GM12878 (cell line): ENCODE measurements at regions of chr15 and their contacts with region 1.

Region 1: DNA sequence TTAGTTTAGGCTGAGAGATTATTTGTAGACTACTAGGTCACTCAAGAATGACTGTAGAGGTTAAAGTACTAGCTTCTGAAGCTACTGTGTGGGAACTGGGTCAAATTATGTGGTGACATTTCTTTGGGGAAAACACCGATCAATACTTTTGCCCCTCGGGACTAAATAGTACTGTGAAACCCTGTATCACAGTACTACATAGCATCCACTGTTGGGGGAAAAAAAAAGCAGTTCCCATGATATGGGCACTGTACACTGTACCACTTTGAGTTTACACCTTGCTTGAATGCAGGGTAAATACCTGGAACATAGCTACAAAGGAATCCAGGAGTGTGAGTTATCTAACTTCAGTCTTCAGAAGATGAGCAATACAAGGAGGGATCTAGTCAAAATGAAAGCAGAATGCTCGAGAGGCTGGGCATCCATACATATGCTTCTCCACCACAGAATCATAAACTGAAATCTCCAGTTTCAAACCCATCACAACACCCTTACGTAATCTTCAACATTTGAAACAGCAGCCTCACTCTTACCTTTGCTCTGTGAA is 311.4 kb downstream of the UNC13C start:
- DNase-seq: peak; percentile 77
- ATAC-seq: peak; percentile 85
- H3K4me3 ChIP-seq: no peak overlapping the region
- H3K27ac ChIP-seq: no peak overlapping the region
- H3K4me1 ChIP-seq: no peaks in the 10 kb centered on the region
- H3K27me3 ChIP-seq: no peaks in the 10 kb centered on the region
- CTCF ChIP-seq: no peak
- EP300 ChIP-seq: peak; percentile 75 to 91; a peak in 3 of 4 replicates
- POLR2A ChIP-seq: no peak
- RAD21 ChIP-seq: no peak

Region 2: DNA sequence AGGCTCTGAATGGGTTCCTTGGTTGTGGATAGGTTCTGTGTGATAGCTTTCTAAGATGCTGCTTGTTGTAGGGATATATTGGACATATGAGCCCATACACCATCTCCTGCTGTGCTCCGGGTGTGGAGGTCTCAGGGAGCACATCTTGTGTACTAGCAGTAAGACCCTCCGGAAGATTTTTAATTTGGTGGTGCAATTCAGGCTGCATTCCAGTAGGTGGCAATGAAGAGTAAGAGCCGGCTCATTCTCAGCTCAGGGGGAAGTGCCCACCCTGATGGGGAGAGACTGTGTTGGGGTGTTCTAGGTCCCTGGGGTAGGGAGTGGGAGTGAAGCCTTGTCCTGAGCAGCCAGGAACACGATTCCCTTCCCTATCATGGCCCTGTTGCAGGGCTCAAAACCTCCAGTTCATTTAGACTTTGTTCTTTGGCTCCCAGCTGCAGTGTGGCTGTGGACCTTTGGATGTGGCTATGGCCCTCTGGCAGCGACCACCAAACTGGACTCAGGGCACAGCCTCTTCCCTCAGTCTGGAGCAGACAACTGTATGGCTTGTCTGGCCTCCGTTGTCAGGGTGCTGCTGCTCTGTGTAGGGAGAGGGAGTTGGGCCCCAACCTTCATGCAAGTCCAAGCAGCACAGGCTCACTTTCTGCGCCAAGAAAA is 206.7 kb before region 1 on chr15:
- CTCF ChIA-PET with region 1: interaction called, 35 read pairs
- POLR2A ChIA-PET with region 1: interaction called, 3 read pairs
- RAD21 ChIA-PET with region 1: interaction called, 46 read pairs
- SMC1A ChIA-PET with region 1: interaction called, 24 read pairs
- in situ Hi-C with region 1: no loop called
- intact Hi-C with region 1: loop called (anchors 2 kb)
- DNase-seq: no peak
- ATAC-seq: peak; percentile 68
- H3K4me3 ChIP-seq: no peak overlapping the region
- H3K27ac ChIP-seq: no peak overlapping the region
- H3K4me1 ChIP-seq: no peaks in the 10 kb centered on the region
- H3K27me3 ChIP-seq: no peaks in the 10 kb centered on the region
- CTCF ChIP-seq: peak; percentile 56 to 80 (median 61)
- EP300 ChIP-seq: no peak
- POLR2A ChIP-seq: no peak
- RAD21 ChIP-seq: peak; percentile 72

Region 3: DNA sequence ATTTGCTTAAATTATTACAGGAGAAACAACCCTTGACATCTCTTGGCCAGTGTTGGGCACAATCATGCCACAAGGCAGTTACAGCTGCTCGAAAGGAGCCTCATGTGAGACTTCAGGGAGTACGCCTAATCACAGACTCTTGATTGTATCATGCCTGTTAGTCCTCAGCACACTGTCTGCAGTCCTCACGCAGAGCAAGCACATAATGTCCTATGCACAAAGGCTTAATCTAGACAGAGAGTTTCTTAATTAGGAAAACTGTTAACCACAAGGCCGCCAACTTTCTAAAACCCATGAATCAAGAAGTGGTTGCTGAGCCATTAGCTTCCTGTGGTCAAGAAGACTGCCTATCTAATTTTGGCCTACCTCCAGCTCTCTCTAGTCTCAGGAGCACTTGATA is 139.4 kb before region 1 on chr15:
- CTCF ChIA-PET with region 1: interaction called, 4 read pairs
- POLR2A ChIA-PET with region 1: interaction called, 6 read pairs
- RAD21 ChIA-PET with region 1: interaction called, 28 read pairs
- SMC1A ChIA-PET with region 1: interaction called, 48 read pairs
- in situ Hi-C with region 1: no loop called
- intact Hi-C with region 1: loop called (anchors 2 kb)
- DNase-seq: peak; percentile 69
- ATAC-seq: peak; percentile 96
- H3K4me3 ChIP-seq: no peak overlapping the region
- H3K27ac ChIP-seq: no peak overlapping the region
- H3K4me1 ChIP-seq: no peaks in the 10 kb centered on the region
- H3K27me3 ChIP-seq: no peaks in the 10 kb centered on the region
- CTCF ChIP-seq: no peak
- EP300 ChIP-seq: peak; percentile 95
- POLR2A ChIP-seq: no peak
- RAD21 ChIP-seq: peak; percentile 0; the same call in 1 of the 2 replicates

Region 4: GRCh38 chr15:54347082-54347827 is 57.6 kb after region 1 on chr15:
- CTCF ChIA-PET with region 1: interaction called, 8 read pairs
- POLR2A ChIA-PET with region 1: interaction called, 4 read pairs
- RAD21 ChIA-PET with region 1: interaction called, 65 read pairs
- SMC1A ChIA-PET with region 1: interaction called, 64 read pairs
- in situ Hi-C with region 1: no loop called
- intact Hi-C with region 1: loop called (anchors 2 kb)
- DNase-seq: peak; percentile 40
- ATAC-seq: peak; percentile 88
- H3K4me3 ChIP-seq: no peak overlapping the region
- H3K27ac ChIP-seq: no peak overlapping the region
- H3K4me1 ChIP-seq: no peaks in the 10 kb centered on the region
- H3K27me3 ChIP-seq: no peaks in the 10 kb centered on the region
- CTCF ChIP-seq: no peak
- EP300 ChIP-seq: peak; percentile 86 to 90
- POLR2A ChIP-seq: no peak
- RAD21 ChIP-seq: peak; percentile 12; the same call in 1 of the 2 replicates

Region 5: GRCh38 chr15:54577476-54578250 is 288.0 kb after region 1 on chr15:
- CTCF ChIA-PET with region 1: no interaction called
- POLR2A ChIA-PET with region 1: no interaction called
- RAD21 ChIA-PET with region 1: interaction called, 13 read pairs
- SMC1A ChIA-PET with region 1: interaction called, 39 read pairs
- in situ Hi-C with region 1: no loop called
- intact Hi-C with region 1: loop called (anchors 2 kb)
- DNase-seq: no peak
- ATAC-seq: no peak
- H3K4me3 ChIP-seq: no peak overlapping the region
- H3K27ac ChIP-seq: no peak overlapping the region
- H3K4me1 ChIP-seq: 0 out of 2 replicates have a peak, but pooled peaks cover 3% of the 10 kb centered on the region
- H3K27me3 ChIP-seq: no peaks in the 10 kb centered on the region
- CTCF ChIP-seq: no peak
- EP300 ChIP-seq: no peak
- POLR2A ChIP-seq: no peak
- RAD21 ChIP-seq: no peak